ENCODE measurements at regions of chr7 and their contacts with region 1.

Region 1: GRCh38 chr7:92609921-92610518 is 19.8 kb upstream of the FAM133B start:
- DNase-seq: no peak
- ATAC-seq: peak; percentile 51
- H3K4me3 Mint-ChIP-seq: no peak overlapping the region
- H3K27ac Mint-ChIP-seq: peak overlapping the region; percentile 17
- H3K4me1 Mint-ChIP-seq: peaks cover 29% of the 10 kb centered on the region
- H3K27me3 Mint-ChIP-seq: no peaks in the 10 kb centered on the region

Region 2: GRCh38 chr7:92595281-92595680 is 14.7 kb before region 1 on chr7:
- CTCF ChIA-PET with region 1: interaction called, 10 read pairs
- POLR2A ChIA-PET with region 1: no interaction called
- intact Hi-C with region 1: loop called in 1 of 2 experiments (anchors 2 kb)
- DNase-seq: no peak
- ATAC-seq: no peak
- H3K4me3 Mint-ChIP-seq: no peak overlapping the region
- H3K27ac Mint-ChIP-seq: no peak overlapping the region
- H3K4me1 Mint-ChIP-seq: peaks cover 7% of the 10 kb centered on the region
- H3K27me3 Mint-ChIP-seq: peaks cover 3% of the 10 kb centered on the region

Region 3: GRCh38 chr7:92621026-92621540 is 11.1 kb after region 1 on chr7:
- CTCF ChIA-PET with region 1: interaction called, 17 read pairs
- POLR2A ChIA-PET with region 1: interaction called, 3 read pairs
- intact Hi-C with region 1: no loop called
- DNase-seq: peak; percentile 90
- ATAC-seq: peak; percentile 78
- H3K4me3 Mint-ChIP-seq: peak overlapping the region; percentile 0
- H3K27ac Mint-ChIP-seq: peak overlapping the region; percentile 90
- H3K4me1 Mint-ChIP-seq: peaks cover 50% of the 10 kb centered on the region
- H3K27me3 Mint-ChIP-seq: no peaks in the 10 kb centered on the region

Region 4: GRCh38 chr7:92751902-92752901 is 142.2 kb after region 1 on chr7:
- CTCF ChIA-PET with region 1: no interaction called
- POLR2A ChIA-PET with region 1: no interaction called
- intact Hi-C with region 1: no loop called
- DNase-seq: no peak
- ATAC-seq: peak; percentile 75
- H3K4me3 Mint-ChIP-seq: no peak overlapping the region
- H3K27ac Mint-ChIP-seq: peak overlapping the region; percentile 68
- H3K4me1 Mint-ChIP-seq: peaks cover 66% of the 10 kb centered on the region
- H3K27me3 Mint-ChIP-seq: no peaks in the 10 kb centered on the region

Region 5: GRCh38 chr7:94195201-94195600 is 1585.2 kb after region 1 on chr7:
- CTCF ChIA-PET with region 1: no interaction called
- POLR2A ChIA-PET with region 1: no interaction called
- intact Hi-C with region 1: no loop called
- DNase-seq: no peak
- ATAC-seq: no peak
- H3K4me3 Mint-ChIP-seq: no peak overlapping the region
- H3K27ac Mint-ChIP-seq: no peak overlapping the region
- H3K4me1 Mint-ChIP-seq: no peaks in the 10 kb centered on the region
- H3K27me3 Mint-ChIP-seq: no peaks in the 10 kb centered on the region